ENCODE measurements at regions of chr9 and their contacts with region 1.

Region 1: DNA sequence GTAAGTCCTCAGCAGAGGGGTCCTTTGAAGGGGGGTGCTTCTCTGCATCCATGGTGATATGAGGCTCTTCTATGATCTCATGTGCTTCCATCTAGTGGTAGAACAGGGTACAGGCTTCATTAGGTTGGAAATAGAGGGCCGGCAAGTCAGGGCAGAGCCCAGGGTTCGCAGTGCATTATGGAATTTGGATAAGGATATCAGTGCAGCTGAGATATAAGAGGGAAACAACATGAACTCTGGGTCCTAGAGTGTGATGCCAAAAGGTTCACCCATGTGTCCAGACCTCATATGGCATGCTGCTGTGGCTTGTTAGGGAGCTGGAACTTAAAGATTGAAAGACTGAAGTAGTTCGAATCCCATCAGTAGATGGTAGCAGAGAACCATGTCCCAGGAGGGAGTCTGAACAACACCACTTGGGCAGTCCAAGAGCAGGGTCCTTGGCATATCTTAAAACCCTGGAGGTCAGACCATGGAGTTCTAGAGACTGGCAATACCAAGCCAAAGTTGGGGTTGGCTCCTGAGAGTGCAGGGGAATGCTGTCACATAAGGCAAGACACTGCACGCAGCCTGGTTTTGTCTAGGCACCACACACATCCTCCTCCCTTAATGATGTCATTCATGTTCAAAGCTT is 2.3 kb downstream of the FAM221B start:
- DNase-seq: peak; percentile 45 to 62 (median 46)
- ATAC-seq: peak; percentile 73
- H3K4me3 ChIP-seq: no peak overlapping the region
- H3K27ac ChIP-seq: no peak overlapping the region
- H3K4me1 ChIP-seq: peaks cover 0 to 12% of the 10 kb centered on the region in 2 experiments; a peak in 3 of 5 replicates
- H3K27me3 ChIP-seq: no peaks in the 10 kb centered on the region
- CTCF ChIP-seq: peak; percentile 60 to 73 (median 63)
- EP300 ChIP-seq: no peak
- POLR2A ChIP-seq: no peak
- RAD21 ChIP-seq: peak; percentile 47 to 54

Region 2: DNA sequence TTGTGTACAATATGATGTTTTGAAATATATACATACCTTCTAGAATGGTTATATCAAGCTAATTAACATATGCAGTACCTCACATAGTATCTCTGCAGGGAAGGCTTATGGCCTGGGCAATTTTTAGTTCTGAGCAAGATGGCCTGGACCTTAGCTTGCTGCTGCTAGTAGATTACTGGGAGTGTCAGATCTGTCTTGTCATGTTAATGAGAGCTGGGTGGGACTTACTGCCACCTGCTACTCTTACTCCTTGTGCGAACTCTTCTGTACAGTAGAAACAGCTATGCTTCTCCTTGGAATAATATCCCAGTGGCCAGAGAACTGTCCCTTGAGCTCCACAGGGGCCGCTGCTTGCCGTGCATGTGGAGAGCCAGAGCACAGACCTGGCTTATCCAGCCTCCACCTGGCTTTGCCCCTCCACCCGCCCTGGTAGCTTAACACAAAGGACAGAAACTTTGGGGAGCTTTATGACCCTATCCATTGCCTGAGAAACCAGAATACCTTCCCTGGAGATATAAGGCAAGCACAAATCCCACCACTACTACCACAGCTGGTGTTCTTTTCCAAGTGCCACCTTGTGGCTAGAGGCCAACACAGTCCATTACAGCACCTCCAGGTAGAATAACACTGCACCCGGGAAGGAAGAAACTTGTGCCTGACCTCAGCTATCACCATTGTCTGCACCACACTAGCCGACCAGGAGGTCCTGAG is 410.6 kb before region 1 on chr9:
- CTCF ChIA-PET with region 1: no interaction called
- POLR2A ChIA-PET with region 1: no interaction called
- in situ Hi-C with region 1: no loop called
- intact Hi-C with region 1: no loop called
- DNase-seq: peak in 1 of 4 experiments; percentile 11
- ATAC-seq: peak; percentile 56; the same call in 2 of the 3 replicates
- H3K4me3 ChIP-seq: no peak overlapping the region
- H3K27ac ChIP-seq: no peak overlapping the region
- H3K4me1 ChIP-seq: no peaks in the 10 kb centered on the region
- H3K27me3 ChIP-seq: no peaks in the 10 kb centered on the region
- CTCF ChIP-seq: peak in 2 of 3 experiments; percentile 25 to 35; a peak in 2 of 6 replicates
- EP300 ChIP-seq: no peak
- POLR2A ChIP-seq: no peak
- RAD21 ChIP-seq: 0 out of 4 replicates have a peak, but pooled peaks of 1 of the 2 experiments have one; percentile 8

Region 3: DNA sequence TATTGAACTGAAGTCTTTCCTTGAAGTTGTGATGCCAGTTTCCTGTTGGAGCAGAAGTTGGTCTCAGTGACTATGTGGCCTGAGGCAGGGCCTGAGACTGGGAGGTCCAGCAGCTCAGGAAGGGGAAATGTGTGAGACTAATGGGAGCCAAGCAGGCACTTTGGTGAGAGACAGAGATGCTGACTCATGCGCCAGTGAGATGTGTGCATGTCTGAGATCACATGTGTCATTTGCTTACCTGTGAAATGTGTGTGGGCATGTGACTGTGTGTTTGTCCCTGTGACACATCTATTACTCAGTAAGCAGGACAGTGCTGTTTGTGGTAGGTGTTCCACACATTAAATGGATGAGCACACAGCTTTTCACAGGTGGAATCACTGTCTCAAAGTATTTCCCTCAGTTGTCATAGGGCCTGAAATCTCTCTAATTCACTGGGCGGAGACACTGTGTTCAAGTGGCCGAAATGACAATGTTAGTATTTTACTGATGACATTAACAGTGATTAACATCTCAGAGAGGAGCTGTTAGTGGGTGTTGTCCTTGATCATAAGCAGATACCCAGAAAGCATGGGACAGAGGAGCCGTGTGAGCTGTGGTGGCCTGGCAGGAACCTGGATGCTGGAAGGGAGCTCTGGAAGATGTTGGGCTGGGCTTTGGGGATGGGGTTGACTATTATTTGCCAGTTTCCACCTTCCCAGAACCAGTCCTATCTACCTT is 27.4 kb before region 1 on chr9:
- CTCF ChIA-PET with region 1: no interaction called
- POLR2A ChIA-PET with region 1: no interaction called
- in situ Hi-C with region 1: no loop called
- intact Hi-C with region 1: no loop called
- DNase-seq: peak; percentile 40 to 73 (median 50)
- ATAC-seq: peak; percentile 78
- H3K4me3 ChIP-seq: no peak overlapping the region
- H3K27ac ChIP-seq: peak overlapping the region; percentile 62; the same call in 2 of the 3 replicates
- H3K4me1 ChIP-seq: peaks cover 17 to 35% of the 10 kb centered on the region in 2 experiments; a peak in 4 of 5 replicates
- H3K27me3 ChIP-seq: no peaks in the 10 kb centered on the region
- CTCF ChIP-seq: no peak
- EP300 ChIP-seq: no peak
- POLR2A ChIP-seq: no peak
- RAD21 ChIP-seq: no peak

Region 4: GRCh38 chr9:35882263-35882848 is 56.2 kb after region 1 on chr9:
- CTCF ChIA-PET with region 1: interaction called, 19 read pairs
- POLR2A ChIA-PET with region 1: no interaction called
- in situ Hi-C with region 1: no loop called
- intact Hi-C with region 1: loop called (anchors 2 kb)
- DNase-seq: peak; percentile 64 to 75 (median 68)
- ATAC-seq: peak; percentile 85
- H3K4me3 ChIP-seq: no peak overlapping the region
- H3K27ac ChIP-seq: no peak overlapping the region
- H3K4me1 ChIP-seq: no peaks in the 10 kb centered on the region
- H3K27me3 ChIP-seq: no peaks in the 10 kb centered on the region
- CTCF ChIP-seq: peak; percentile 81 to 88 (median 85)
- EP300 ChIP-seq: no peak
- POLR2A ChIP-seq: no peak
- RAD21 ChIP-seq: peak; percentile 66 to 82

Measured in K562 (cell line).